Naive thymus-derived CD4-positive, alpha-beta T cell (primary cell): ENCODE measurements at regions of chr11 and their contacts with region 1.

Region 1: DNA sequence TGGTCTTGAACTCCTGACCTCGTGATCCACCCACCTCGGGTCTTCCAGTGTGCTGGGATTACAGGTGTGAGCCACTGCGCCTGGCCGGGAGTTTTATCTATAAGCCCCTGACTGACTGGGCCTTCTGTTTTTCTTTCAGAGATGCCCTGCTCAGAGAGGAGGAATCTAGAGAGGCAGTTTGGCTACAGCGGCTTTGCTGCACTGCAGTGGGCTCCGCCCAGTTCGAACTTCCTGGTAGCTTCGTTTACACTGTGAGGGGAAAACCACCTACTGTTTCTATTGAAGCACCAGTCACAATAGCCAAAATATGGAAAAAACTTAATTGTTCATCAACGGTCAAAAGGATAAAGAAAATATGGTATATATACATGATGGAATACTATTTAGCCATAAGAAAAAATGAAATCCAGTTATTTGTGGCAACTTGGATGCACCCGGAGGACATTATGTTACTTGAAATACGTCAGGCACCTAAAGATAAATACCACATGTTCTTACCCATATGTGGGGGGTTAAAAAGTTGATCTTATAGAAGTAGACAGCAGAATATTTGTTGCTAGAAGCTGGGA is 31.9 kb upstream of the FAM181B start:
- DNase-seq: peak in 6 of 9 donors; percentile 14 to 46 (median 22)
- ATAC-seq: peak; percentile 47
- H3K4me3 ChIP-seq: no peak overlapping the region
- H3K4me3 Mint-ChIP-seq: peak overlapping the region in 7 of 10 donors; percentile 20 to 72 (median 51)
- H3K27ac ChIP-seq: no peak overlapping the region
- H3K27ac Mint-ChIP-seq: peak overlapping the region in 5 of 9 donors; percentile 14 to 79 (median 72)
- H3K4me1 ChIP-seq: peaks cover 0 to 4% of the 10 kb centered on the region in 2 donors
- H3K4me1 Mint-ChIP-seq: peaks cover 0 to 28% (median 19%) of the 10 kb centered on the region in 7 donors
- H3K27me3 ChIP-seq: no peaks in the 10 kb centered on the region
- H3K27me3 Mint-ChIP-seq: peaks cover 0 to 15% (median 0%) of the 10 kb centered on the region in 5 donors

Region 2: GRCh38 chr11:82750643-82751139 is 14.9 kb before region 1 on chr11:
- CTCF ChIA-PET with region 1: no interaction called
- POLR2A ChIA-PET with region 1: interaction called, 3 read pairs
- intact Hi-C with region 1: loop called in 1 of 2 experiments (anchors 2 kb)
- DNase-seq: peak in 7 of 9 donors; percentile 41 to 66 (median 62)
- ATAC-seq: peak; percentile 84
- H3K4me3 ChIP-seq: peak overlapping the region; percentile 21
- H3K4me3 Mint-ChIP-seq: peak overlapping the region; percentile 71 to 87 (median 82)
- H3K27ac ChIP-seq: peak overlapping the region; percentile 11
- H3K27ac Mint-ChIP-seq: peak overlapping the region; percentile 22 to 91 (median 60)
- H3K4me1 ChIP-seq: peaks cover 2 to 27% of the 10 kb centered on the region in 2 donors
- H3K4me1 Mint-ChIP-seq: peaks cover 15 to 47% (median 38%) of the 10 kb centered on the region in 7 donors
- H3K27me3 ChIP-seq: no peaks in the 10 kb centered on the region
- H3K27me3 Mint-ChIP-seq: peaks cover 0 to 38% (median 0%) of the 10 kb centered on the region in 5 donors

Region 3: DNA sequence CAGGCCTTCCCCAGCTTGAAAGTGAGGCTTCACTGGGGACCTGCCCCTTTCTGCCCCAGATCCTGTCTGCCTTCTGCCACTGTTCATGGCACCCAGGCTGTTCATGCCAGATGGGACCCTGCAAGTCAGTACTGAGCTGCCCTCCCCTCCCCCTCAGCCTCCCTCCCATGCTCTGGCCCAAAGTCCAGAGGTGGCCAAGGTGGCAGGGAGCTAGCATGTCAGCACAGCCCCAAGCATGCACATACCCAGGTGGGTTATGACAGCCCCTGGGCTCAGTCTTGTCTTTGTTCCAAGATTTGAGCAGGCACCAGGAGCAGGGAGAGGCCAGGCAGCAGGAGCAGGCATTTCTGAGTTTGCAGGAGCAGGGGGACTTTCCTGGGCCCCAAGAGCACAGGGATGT is 180.1 kb after region 1 on chr11:
- CTCF ChIA-PET with region 1: no interaction called
- POLR2A ChIA-PET with region 1: no interaction called
- intact Hi-C with region 1: no loop called
- DNase-seq: no peak
- ATAC-seq: no peak
- H3K4me3 ChIP-seq: no peak overlapping the region
- H3K4me3 Mint-ChIP-seq: no peak overlapping the region
- H3K27ac ChIP-seq: no peak overlapping the region
- H3K27ac Mint-ChIP-seq: no peak overlapping the region
- H3K4me1 ChIP-seq: no peaks in the 10 kb centered on the region
- H3K4me1 Mint-ChIP-seq: peaks cover 0 to 28% (median 13%) of the 10 kb centered on the region in 7 donors
- H3K27me3 ChIP-seq: no peaks in the 10 kb centered on the region
- H3K27me3 Mint-ChIP-seq: peaks cover 0 to 21% (median 0%) of the 10 kb centered on the region in 5 donors